ENCODE measurements at regions of chr1 and their contacts with region 1.

Region 1: GRCh38 chr1:35120458-35121133 is 41.4 kb downstream of the ZMYM1 start:
- DNase-seq: no peak
- ATAC-seq: peak; percentile 96
- H3K4me3 ChIP-seq: peak overlapping the region; percentile 60; the same call in 1 of the 2 replicates
- H3K27ac ChIP-seq: peak overlapping the region; percentile 66
- H3K4me1 ChIP-seq: peaks cover 15% of the 10 kb centered on the region
- H3K27me3 ChIP-seq: no peaks in the 10 kb centered on the region
- CTCF ChIP-seq: no peak
- EP300 ChIP-seq: no peak
- POLR2A ChIP-seq: peak; percentile 62
- RAD21 ChIP-seq: no peak

Region 2: DNA sequence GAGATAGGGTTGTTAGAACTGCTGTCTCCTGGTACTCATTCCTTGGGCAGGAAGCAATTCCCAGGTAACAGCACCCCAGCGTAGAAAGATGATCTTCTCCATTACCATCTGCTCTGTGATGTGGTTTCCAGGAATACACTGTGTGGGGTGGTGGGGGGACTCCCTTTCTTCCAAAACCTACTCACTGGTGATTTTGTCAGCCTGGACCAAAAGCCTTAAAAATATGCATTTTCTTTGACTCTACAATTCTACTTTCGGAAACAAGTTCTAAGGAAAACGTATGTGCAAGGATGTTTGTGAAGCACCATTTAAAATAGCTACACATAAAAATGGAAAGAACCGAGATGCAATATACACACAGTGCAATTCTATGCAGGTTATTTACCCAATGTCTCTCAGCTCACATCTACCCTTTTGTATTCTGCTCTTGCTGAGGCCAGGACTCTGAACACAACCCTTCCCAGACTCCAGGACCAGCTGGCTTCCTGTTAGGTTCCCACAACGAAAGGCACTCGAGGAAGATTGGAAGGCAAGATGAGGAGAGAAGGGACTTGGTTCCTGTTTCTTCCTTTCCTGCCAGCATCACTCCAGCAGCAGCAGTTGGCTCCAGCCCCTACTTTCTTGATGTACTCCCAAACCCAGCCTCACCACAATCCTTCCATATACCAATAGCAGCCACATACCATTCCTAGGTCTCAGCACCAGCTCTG is 398.8 kb before region 1 on chr1:
- CTCF ChIA-PET with region 1: no interaction called
- POLR2A ChIA-PET with region 1: no interaction called
- RAD21 ChIA-PET with region 1: no interaction called
- SMC1A ChIA-PET with region 1: no interaction called
- in situ Hi-C with region 1: no loop called
- intact Hi-C with region 1: no loop called
- DNase-seq: no peak
- ATAC-seq: no peak
- H3K4me3 ChIP-seq: no peak overlapping the region
- H3K27ac ChIP-seq: no peak overlapping the region
- H3K4me1 ChIP-seq: no peaks in the 10 kb centered on the region
- H3K27me3 ChIP-seq: peaks cover 0 to 1% of the 10 kb centered on the region in 2 experiments; a peak in 2 of 4 replicates
- CTCF ChIP-seq: no peak
- EP300 ChIP-seq: no peak
- POLR2A ChIP-seq: no peak
- RAD21 ChIP-seq: no peak

Region 3: GRCh38 chr1:35085421-35085820 is 35.2 kb before region 1 on chr1:
- CTCF ChIA-PET with region 1: no interaction called
- POLR2A ChIA-PET with region 1: interaction called, 10 read pairs
- RAD21 ChIA-PET with region 1: no interaction called
- SMC1A ChIA-PET with region 1: no interaction called
- in situ Hi-C with region 1: no loop called
- intact Hi-C with region 1: no loop called
- DNase-seq: no peak
- ATAC-seq: no peak
- H3K4me3 ChIP-seq: no peak overlapping the region
- H3K27ac ChIP-seq: no peak overlapping the region
- H3K4me1 ChIP-seq: no peaks in the 10 kb centered on the region
- H3K27me3 ChIP-seq: no peaks in the 10 kb centered on the region
- CTCF ChIP-seq: no peak
- EP300 ChIP-seq: no peak
- POLR2A ChIP-seq: no peak
- RAD21 ChIP-seq: no peak

Region 4: GRCh38 chr1:35157904-35158303 is 37.3 kb after region 1 on chr1:
- CTCF ChIA-PET with region 1: no interaction called
- POLR2A ChIA-PET with region 1: no interaction called
- RAD21 ChIA-PET with region 1: no interaction called
- SMC1A ChIA-PET with region 1: no interaction called
- in situ Hi-C with region 1: no loop called
- intact Hi-C with region 1: no loop called
- DNase-seq: no peak
- ATAC-seq: no peak
- H3K4me3 ChIP-seq: no peak overlapping the region
- H3K27ac ChIP-seq: no peak overlapping the region
- H3K4me1 ChIP-seq: no peaks in the 10 kb centered on the region
- H3K27me3 ChIP-seq: no peaks in the 10 kb centered on the region
- CTCF ChIP-seq: no peak
- EP300 ChIP-seq: no peak
- POLR2A ChIP-seq: no peak
- RAD21 ChIP-seq: no peak